CD8-positive, alpha-beta memory T cell (primary cell): ENCODE measurements at regions of chr2 and their contacts with region 1.

Region 1: DNA sequence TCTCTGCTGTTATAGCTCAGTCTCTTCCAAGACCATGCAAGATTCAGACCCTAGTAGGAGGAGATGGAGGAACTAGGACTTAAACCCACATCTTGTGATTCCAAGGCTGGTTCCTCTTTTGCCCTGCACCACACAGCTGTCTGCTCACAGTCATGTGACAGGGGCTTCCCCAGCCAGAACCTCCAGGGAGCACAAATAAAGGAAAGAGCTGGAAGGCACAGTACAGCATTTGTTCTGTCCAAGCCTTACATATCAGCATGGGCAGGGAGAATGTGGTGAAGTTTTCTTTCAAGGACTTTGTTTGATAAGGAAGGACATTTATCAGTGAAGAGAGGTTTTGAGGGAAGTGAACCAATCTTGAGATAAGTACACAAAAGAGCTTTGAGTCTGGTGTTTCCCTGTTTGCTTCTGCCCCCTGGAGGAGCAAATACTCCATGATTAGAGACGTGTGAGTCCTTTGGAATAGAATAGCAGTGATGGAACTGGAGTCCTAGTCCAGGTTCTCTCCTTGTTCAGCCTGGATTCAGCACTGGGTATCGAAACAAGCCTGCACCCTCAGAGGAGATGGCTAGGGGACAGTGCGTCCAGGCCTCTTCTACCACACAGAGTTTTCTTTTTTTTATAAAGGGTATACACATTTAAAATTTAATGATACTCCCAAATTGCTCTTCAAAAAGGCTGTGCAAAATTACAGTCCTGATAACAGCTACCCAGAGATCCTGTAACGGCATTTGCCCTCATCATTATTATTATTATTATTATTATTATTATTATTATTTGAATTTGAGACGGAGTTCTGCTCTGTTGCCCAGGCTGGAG is 24.6 kb upstream of the CASP10 start:
- DNase-seq: peak; percentile 14 to 77 (median 56)
- H3K4me3 ChIP-seq: no peak overlapping the region
- H3K4me3 Mint-ChIP-seq: peak overlapping the region in 2 of 7 donors; percentile 6 to 45
- H3K27ac ChIP-seq: no peak overlapping the region
- H3K27ac Mint-ChIP-seq: peak overlapping the region; percentile 72 to 97 (median 90)
- H3K4me1 ChIP-seq: peaks cover 9% of the 10 kb centered on the region
- H3K4me1 Mint-ChIP-seq: peaks cover 14 to 32% (median 30%) of the 10 kb centered on the region in 3 donors
- H3K27me3 ChIP-seq: no peaks in the 10 kb centered on the region
- H3K27me3 Mint-ChIP-seq: no peaks in the 10 kb centered on the region

Region 2: DNA sequence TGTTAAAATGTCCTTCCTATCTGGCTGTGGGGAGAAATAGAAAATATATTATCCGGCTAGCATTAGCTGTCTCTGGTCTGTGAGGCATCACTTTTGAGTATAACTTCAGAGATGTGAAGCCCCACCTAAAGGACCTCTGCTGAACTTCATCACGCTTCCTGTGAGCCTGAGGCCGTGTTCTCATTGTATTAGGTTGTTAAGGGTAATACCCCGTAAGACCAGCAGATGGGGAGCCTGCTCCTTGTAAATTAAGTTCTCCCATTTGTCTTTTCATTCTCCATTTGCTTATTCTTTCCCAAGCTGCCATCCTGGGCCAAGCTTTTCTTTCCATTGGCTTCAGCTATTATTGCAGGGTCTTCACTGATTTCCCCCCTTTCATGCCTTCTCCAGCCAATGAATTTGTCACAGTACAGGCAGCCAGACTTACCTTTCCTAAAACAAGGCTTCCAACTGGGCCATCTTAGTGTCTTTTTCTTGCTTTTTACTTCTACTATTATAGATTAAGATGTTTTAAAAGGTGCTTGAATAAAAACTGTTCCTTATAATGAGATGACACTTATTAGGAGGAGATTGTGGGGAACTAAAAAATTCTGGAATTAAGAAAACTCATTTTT is 256.8 kb before region 1 on chr2:
- CTCF ChIA-PET with region 1: interaction called, 10 read pairs
- POLR2A ChIA-PET with region 1: no interaction called
- DNase-seq: peak; percentile 58 to 84 (median 71)
- H3K4me3 ChIP-seq: no peak overlapping the region
- H3K4me3 Mint-ChIP-seq: no peak overlapping the region
- H3K27ac ChIP-seq: no peak overlapping the region
- H3K27ac Mint-ChIP-seq: peak overlapping the region; percentile 1 to 92 (median 55)
- H3K4me1 ChIP-seq: no peaks in the 10 kb centered on the region
- H3K4me1 Mint-ChIP-seq: peaks cover 3 to 14% (median 9%) of the 10 kb centered on the region in 3 donors
- H3K27me3 ChIP-seq: no peaks in the 10 kb centered on the region
- H3K27me3 Mint-ChIP-seq: no peaks in the 10 kb centered on the region

Region 3: GRCh38 chr2:200963124-200963917 is 195.0 kb before region 1 on chr2 and contains the start of gene ORC2:
- CTCF ChIA-PET with region 1: interaction called, 16 read pairs
- POLR2A ChIA-PET with region 1: interaction called, 6 read pairs
- DNase-seq: peak; percentile 89 to 96 (median 93)
- H3K4me3 ChIP-seq: peak within 1 kb of the TSS; percentile 93
- H3K4me3 Mint-ChIP-seq: peak within 1 kb of the TSS; percentile 97 to 99 (median 97)
- H3K27ac ChIP-seq: peak within 1 kb of the TSS; percentile 74
- H3K27ac Mint-ChIP-seq: peak within 1 kb of the TSS; percentile 98 to 100 (median 98)
- H3K4me1 ChIP-seq: peaks cover 32% of the 10 kb centered on the region
- H3K4me1 Mint-ChIP-seq: peaks cover 59 to 73% (median 70%) of the 10 kb centered on the region in 3 donors
- H3K27me3 ChIP-seq: no peaks in the 10 kb centered on the region
- H3K27me3 Mint-ChIP-seq: peaks cover 0 to 2% of the 10 kb centered on the region in 2 donors
- total RNA-seq, gene ORC2: 47.9 to 51.9 TPM

Region 4: GRCh38 chr2:201071479-201072200 is 86.7 kb before region 1 on chr2 and contains the starts of genes HYCC2 and NDUFB3:
- CTCF ChIA-PET with region 1: interaction called, 30 read pairs
- POLR2A ChIA-PET with region 1: interaction called, 3 read pairs
- DNase-seq: peak; percentile 88 to 96 (median 94)
- H3K4me3 ChIP-seq: peak within 1 kb of the TSS; percentile 88
- H3K4me3 Mint-ChIP-seq: peak within 1 kb of the TSS; percentile 92 to 99 (median 94)
- H3K27ac ChIP-seq: peak within 1 kb of the TSS; percentile 87
- H3K27ac Mint-ChIP-seq: peak within 1 kb of the TSS; percentile 95 to 99 (median 96)
- H3K4me1 ChIP-seq: peaks cover 47% of the 10 kb centered on the region
- H3K4me1 Mint-ChIP-seq: peaks cover 54 to 67% (median 65%) of the 10 kb centered on the region in 3 donors
- H3K27me3 ChIP-seq: no peaks in the 10 kb centered on the region
- H3K27me3 Mint-ChIP-seq: peaks cover 0 to 1% of the 10 kb centered on the region in 2 donors
- total RNA-seq, gene HYCC2: 25.5 to 27.7 TPM
- total RNA-seq, gene NDUFB3: 129 to 145 TPM

Region 5: DNA sequence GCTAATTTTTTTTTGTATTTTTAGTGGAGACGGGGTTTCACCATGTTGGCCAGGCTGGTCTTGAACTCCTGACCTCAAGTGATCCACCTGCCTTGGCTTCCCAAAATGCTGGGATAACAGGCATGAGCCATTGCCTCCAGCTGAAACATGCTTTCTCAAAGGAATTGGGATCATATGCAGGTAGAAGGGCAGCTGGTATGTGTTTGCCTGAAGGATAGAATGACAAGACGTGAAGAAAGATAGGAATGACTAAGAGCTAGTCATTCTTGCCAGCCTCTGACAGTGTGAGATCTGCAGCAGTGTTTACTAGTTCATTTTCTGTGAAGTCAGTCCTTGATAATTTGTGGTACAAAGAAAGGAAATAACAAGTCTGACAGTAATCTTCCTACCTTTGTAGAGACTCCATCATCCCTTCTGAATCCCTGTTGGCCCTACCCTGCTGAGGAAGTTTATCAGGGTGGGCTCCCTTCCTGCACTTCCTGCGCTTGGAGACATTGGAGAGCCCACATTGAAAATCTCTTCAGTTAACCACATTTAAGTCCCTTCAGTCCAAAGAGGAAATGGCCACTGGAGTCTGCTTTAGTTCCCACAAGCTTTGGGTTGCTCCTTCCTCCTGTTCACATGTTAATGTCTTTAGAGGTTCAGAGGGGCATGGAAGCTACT is 27.7 kb before region 1 on chr2:
- CTCF ChIA-PET with region 1: interaction called, 13 read pairs
- POLR2A ChIA-PET with region 1: no interaction called
- DNase-seq: peak in 3 of 5 donors; percentile 49 to 58 (median 57)
- H3K4me3 ChIP-seq: peak overlapping the region; percentile 32
- H3K4me3 Mint-ChIP-seq: peak overlapping the region; percentile 64 to 87 (median 76)
- H3K27ac ChIP-seq: peak overlapping the region; percentile 61
- H3K27ac Mint-ChIP-seq: peak overlapping the region; percentile 95 to 99 (median 96)
- H3K4me1 ChIP-seq: peaks cover 75% of the 10 kb centered on the region
- H3K4me1 Mint-ChIP-seq: peaks cover 75 to 88% (median 83%) of the 10 kb centered on the region in 3 donors
- H3K27me3 ChIP-seq: no peaks in the 10 kb centered on the region
- H3K27me3 Mint-ChIP-seq: peaks cover 0 to 2% of the 10 kb centered on the region in 2 donors

Region 6: GRCh38 chr2:201144101-201145051 is 13.9 kb before region 1 on chr2:
- CTCF ChIA-PET with region 1: interaction called, 17 read pairs
- POLR2A ChIA-PET with region 1: interaction called, 5 read pairs
- DNase-seq: no peak
- H3K4me3 ChIP-seq: no peak overlapping the region
- H3K4me3 Mint-ChIP-seq: no peak overlapping the region
- H3K27ac ChIP-seq: no peak overlapping the region
- H3K27ac Mint-ChIP-seq: peak overlapping the region in 3 of 8 donors; percentile 6 to 64 (median 33)
- H3K4me1 ChIP-seq: no peaks in the 10 kb centered on the region
- H3K4me1 Mint-ChIP-seq: peaks cover 15 to 38% (median 21%) of the 10 kb centered on the region in 3 donors
- H3K27me3 ChIP-seq: no peaks in the 10 kb centered on the region
- H3K27me3 Mint-ChIP-seq: no peaks in the 10 kb centered on the region

Region 7: DNA sequence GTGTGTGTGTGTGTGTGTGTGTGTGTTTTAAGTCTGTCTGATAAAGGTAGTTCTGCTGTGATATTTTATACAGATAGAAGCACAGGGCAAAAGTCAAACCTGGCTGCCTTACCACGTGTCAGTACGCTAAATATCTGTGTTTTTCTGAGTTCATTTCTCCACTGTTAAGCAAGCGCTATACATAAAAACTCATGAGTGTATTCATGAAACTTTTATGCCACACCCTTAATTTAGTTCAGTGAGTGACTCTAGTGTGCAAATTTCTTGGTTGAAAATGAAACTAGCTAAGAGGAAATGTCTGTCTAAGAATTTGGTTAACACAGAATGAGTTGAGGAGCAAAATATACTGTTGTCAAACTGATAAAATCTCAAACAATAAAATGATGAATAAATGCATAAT is 35.8 kb after region 1 on chr2:
- CTCF ChIA-PET with region 1: no interaction called
- POLR2A ChIA-PET with region 1: no interaction called
- DNase-seq: peak in 2 of 5 donors; percentile 19 to 20
- H3K4me3 ChIP-seq: peak overlapping the region; percentile 14
- H3K4me3 Mint-ChIP-seq: peak overlapping the region; percentile 5 to 81 (median 77)
- H3K27ac ChIP-seq: no peak overlapping the region
- H3K27ac Mint-ChIP-seq: peak overlapping the region; percentile 53 to 93 (median 90)
- H3K4me1 ChIP-seq: peaks cover 68% of the 10 kb centered on the region
- H3K4me1 Mint-ChIP-seq: peaks cover 51 to 74% (median 66%) of the 10 kb centered on the region in 3 donors
- H3K27me3 ChIP-seq: no peaks in the 10 kb centered on the region
- H3K27me3 Mint-ChIP-seq: no peaks in the 10 kb centered on the region

Region 8: GRCh38 chr2:201220102-201220570 is 61.8 kb after region 1 on chr2:
- CTCF ChIA-PET with region 1: no interaction called
- POLR2A ChIA-PET with region 1: no interaction called
- DNase-seq: no peak
- H3K4me3 ChIP-seq: no peak overlapping the region
- H3K4me3 Mint-ChIP-seq: no peak overlapping the region
- H3K27ac ChIP-seq: no peak overlapping the region
- H3K27ac Mint-ChIP-seq: peak overlapping the region in 2 of 8 donors; percentile 39 to 43
- H3K4me1 ChIP-seq: peaks cover 21% of the 10 kb centered on the region
- H3K4me1 Mint-ChIP-seq: peaks cover 15 to 20% (median 15%) of the 10 kb centered on the region in 3 donors
- H3K27me3 ChIP-seq: no peaks in the 10 kb centered on the region
- H3K27me3 Mint-ChIP-seq: peaks cover 0 to 1% of the 10 kb centered on the region in 2 donors